ENCODE measurements at regions of chr13 and their contacts with region 1.

Region 1: GRCh38 chr13:94305463-94305862 is 174.0 kb downstream of the DCT start:
- DNase-seq: peak; percentile 90
- H3K4me3 Mint-ChIP-seq: no peak overlapping the region
- H3K27ac Mint-ChIP-seq: peak overlapping the region; percentile 82
- H3K4me1 Mint-ChIP-seq: peaks cover 28% of the 10 kb centered on the region
- H3K27me3 Mint-ChIP-seq: no peaks in the 10 kb centered on the region
- CTCF ChIP-seq: no peak

Region 2: GRCh38 chr13:94233401-94233800 is 72.1 kb before region 1 on chr13:
- CTCF ChIA-PET with region 1: interaction called, 3 read pairs
- POLR2A ChIA-PET with region 1: interaction called, 12 read pairs
- intact Hi-C with region 1: loop called (anchors 10 kb)
- DNase-seq: peak; percentile 96
- H3K4me3 Mint-ChIP-seq: peak overlapping the region; percentile 56
- H3K27ac Mint-ChIP-seq: peak overlapping the region; percentile 94
- H3K4me1 Mint-ChIP-seq: peaks cover 27% of the 10 kb centered on the region
- H3K27me3 Mint-ChIP-seq: no peaks in the 10 kb centered on the region
- CTCF ChIP-seq: no peak

Region 3: DNA sequence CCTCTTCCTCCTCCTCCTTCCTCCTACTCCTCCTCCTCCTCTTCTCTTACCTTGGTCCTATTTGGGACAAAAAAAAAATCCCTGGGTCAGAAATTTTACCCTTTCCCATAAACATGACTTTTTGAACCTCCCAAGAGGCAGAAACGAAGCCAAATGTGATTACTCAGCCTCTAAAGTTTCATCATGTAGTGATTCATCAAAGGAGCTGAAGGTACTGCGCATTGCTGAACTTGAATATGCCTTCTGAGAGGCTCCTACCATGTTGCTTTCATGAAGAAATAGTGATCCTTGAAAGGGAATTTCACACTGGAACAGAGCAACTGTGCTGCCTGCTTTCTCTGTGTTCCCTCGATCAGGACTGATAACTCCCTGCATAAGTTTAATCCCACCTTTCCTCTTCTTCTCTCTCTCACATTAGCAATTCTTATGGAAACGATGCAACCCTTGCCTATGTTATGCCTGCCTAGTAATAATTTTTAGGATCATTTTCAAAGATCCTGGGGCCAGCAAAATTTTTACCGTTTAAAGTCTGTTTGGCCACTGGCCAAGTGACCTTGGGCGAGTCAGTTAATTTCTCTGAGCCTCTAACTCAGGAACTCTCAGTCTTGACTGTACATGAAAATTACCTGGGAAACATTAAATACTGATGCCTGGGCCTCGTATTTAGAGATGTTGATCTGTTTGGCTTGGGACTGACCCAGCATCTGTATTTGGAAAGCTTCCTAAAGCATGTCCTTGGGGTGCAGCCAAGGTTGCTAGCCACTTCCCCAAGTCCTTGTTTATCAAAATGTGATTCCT is 24.5 kb after region 1 on chr13:
- CTCF ChIA-PET with region 1: no interaction called
- POLR2A ChIA-PET with region 1: interaction called, 20 read pairs
- intact Hi-C with region 1: no loop called
- DNase-seq: peak; percentile 96
- H3K4me3 Mint-ChIP-seq: peak overlapping the region; percentile 21
- H3K27ac Mint-ChIP-seq: peak overlapping the region; percentile 90
- H3K4me1 Mint-ChIP-seq: peaks cover 18% of the 10 kb centered on the region
- H3K27me3 Mint-ChIP-seq: no peaks in the 10 kb centered on the region
- CTCF ChIP-seq: no peak

Region 4: DNA sequence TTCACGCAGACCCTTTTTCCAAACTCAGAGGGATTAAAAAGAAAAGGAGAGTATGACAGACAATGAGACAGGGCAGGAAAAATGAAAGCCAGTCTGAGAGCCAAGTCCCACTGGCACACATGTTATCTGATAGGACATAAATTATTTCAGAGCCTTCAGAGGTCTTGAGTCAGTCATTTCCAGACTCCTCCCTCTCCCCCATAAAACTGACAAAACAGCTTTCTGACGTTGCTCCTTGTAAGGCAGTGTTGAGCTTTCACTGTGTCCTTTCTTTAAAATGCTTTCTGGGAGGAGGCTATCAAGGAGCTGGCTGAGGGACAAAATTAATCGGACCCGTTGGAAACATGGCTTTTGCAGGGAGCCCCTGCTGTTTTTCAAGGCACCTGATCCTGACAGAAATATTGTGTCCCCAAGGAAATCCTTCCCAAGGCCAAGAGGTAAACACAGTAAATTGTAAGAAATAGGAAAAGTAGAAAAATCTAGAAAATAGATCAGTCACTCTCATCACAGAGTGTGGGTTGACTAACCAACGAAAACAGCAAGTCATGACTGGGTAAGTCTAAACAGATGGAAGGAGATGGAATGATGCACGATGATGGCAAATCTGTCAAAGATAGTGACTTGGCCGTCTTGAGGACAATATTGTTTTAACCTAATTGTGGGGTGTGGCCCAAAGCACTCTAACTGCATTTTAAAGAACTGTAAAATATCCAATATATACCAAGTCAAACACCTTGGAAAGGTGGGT is 84.3 kb after region 1 on chr13:
- CTCF ChIA-PET with region 1: no interaction called
- POLR2A ChIA-PET with region 1: no interaction called
- intact Hi-C with region 1: no loop called
- DNase-seq: no peak
- H3K4me3 Mint-ChIP-seq: no peak overlapping the region
- H3K27ac Mint-ChIP-seq: no peak overlapping the region
- H3K4me1 Mint-ChIP-seq: no peaks in the 10 kb centered on the region
- H3K27me3 Mint-ChIP-seq: no peaks in the 10 kb centered on the region
- CTCF ChIP-seq: no peak